Posterior vena cava (tissue), 2 donors: ENCODE measurements at regions of chr3 and their contacts with region 1.

Region 1: DNA sequence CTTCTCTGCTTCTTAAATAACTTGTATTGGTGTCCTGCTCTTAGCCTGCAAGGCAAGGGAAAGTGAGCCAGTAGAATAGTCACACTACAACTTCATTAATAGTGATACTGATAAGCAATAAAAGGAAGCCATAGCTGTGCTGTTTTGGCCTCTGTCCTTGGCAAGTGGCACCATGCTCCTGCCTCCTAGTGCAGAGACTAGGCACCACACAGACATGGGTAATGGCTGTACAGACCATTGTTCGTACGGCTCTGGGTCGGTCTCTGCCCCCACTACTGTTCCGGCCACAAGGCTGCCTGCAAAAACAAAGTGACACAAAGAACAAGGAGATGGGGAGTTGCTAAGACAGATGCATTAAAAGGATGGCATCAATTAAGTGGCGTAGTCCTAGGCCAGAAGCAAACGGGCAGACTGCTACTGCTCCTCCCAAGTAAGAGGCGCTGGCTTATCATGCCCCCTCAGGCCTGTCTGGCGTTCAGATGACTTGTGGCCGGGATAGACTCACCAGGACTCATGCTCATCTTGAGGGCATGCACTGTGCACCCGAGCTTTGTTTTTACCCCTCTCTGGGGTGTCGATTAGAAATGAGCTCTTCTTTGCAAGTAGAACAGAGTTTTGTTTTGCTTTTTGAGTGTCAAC is 75.6 kb downstream of the TRAK1 start:
- DNase-seq: no peak

Region 2: DNA sequence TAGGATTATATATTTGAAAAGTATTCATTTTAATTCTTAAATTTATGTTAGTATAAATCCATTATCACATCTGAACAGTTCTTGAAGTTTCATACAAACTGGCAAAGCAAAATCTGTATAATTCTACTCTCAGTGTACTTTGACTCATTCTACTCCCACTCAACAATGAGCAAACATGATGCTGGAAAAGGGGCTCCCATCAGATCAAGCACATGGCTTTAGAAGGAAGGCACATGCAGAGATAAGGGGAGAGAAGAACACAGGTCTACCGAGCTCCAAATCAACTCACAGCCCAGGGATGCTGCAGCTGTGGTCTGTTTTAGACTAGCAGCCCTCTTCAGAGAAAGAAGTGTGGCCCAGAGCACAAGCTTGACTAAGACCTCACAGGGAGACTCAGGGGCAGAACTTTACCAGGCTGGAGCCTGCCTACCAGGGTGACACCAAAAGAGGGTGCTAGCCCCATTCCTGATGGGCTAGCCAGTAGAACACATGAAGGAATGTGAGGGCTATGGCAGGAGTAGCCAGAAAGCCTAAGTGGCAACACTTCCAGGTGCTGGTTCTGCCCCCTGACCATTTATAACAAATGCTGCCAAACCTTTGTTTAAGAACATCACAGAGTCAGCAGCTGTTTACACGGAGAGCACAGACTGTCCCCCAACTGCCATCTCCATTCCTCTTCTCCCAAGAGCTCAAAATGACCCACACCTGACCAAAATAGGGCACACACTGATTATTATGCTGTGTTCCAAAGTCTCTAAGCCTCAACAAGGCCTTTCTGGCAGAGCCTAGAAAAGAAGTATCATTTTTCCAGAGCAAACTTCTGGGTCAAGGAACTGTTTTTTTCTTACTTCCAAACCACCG is 395.5 kb after region 1 on chr3:
- intact Hi-C with region 1: loop called in 1 of 2 experiments (anchors 5 kb)
- DNase-seq: no peak

Region 3: GRCh38 chr3:42613462-42613861 is 446.7 kb after region 1 on chr3:
- intact Hi-C with region 1: no loop called
- DNase-seq: no peak

Region 4: GRCh38 chr3:43855674-43856299 is 1689.0 kb after region 1 on chr3:
- intact Hi-C with region 1: no loop called
- DNase-seq: no peak